GM12878 (cell line): ENCODE measurements at regions of chr20 and their contacts with region 1.

Region 1: DNA sequence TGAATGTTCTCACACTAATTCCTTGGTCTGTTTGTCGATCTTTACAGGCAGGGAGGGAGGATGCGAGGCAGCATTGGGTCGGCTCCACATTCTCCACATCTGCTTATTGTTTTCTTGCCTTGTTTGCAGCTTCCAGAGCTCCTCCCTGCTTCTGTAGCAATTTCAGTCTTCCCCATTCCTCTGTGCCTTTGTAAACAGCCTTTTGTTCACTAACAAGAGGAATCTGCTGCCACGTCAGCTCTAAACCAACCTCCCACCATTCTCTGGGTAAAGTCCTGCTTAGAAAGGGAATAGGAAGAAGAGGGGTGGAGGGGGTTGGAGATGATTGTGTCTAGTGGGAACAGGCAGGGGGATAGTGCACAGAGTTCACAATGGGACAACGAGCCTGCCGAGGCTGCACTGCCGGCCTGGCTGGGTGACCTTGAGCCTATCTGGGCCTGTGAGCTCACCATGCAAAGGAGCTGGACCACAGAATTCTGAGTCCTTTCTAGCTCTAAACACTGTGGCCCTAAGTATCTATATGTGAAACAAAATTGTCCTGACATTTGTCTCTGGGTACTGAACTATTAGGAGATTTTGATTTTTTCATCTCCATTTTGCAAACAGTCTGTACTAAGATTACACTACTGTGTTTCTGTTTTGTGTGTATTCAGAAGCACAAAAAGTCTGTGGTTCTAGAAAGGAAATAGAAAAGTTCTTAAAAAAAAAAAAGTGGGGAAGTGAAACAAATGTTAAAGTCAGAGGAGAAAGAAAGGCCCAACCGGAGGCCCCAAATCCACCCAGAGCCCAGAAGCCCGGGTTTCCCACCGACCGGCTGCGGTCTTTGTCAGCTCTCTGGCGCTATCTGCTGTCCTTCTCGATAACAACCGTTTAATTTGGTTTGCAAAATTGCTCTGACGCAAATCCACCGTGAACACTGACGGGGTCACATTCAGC is 1.4 kb upstream of the PRND start:
- DNase-seq: peak; percentile 71
- ATAC-seq: peak; percentile 96
- H3K4me3 ChIP-seq: peak overlapping the region; percentile 19; the same call in 1 of the 2 replicates
- H3K27ac ChIP-seq: peak overlapping the region; percentile 67
- H3K4me1 ChIP-seq: peaks cover 17% of the 10 kb centered on the region
- H3K27me3 ChIP-seq: no peaks in the 10 kb centered on the region
- CTCF ChIP-seq: peak; percentile 65 to 86 (median 72); a peak in 5 of 6 replicates
- EP300 ChIP-seq: peak in 1 of 2 experiments; percentile 45; a peak in 1 of 4 replicates
- POLR2A ChIP-seq: peak; percentile 37; the same call in 1 of the 2 replicates
- RAD21 ChIP-seq: peak; percentile 96

Region 2: DNA sequence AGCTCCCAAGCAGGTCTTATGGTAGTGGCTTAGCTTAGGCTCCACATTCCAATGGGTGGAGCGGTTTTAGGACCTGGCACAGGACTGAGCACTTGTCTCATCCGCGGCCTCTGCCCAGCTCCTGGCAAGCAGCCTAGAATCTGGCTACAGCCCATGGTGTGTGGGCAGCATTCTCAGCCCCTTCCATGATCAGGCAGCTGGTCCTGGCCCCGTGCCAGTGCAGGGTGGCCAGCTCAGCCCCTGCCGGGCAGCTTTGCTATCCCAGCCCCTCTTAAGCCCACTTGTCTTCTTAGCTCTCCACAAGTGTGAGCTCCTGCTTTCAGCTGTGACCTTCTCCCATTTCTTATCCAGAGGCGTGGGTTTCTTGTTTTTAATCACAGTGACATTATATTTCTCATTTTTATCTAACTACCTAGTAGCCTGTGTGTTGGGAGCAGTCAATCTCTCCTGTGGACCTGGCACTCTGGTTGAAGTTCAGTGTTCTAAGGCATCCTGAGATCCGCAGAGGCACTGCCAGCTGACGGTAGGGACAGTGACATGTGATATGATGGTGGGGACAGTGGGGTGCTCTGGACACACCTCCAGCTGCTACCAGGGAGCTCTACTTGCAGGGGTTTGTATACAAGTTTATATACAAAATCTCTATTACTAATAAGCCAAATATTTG is 118.5 kb before region 1 on chr20:
- CTCF ChIA-PET with region 1: interaction called, 199 read pairs
- POLR2A ChIA-PET with region 1: no interaction called
- RAD21 ChIA-PET with region 1: interaction called, 36 read pairs
- SMC1A ChIA-PET with region 1: interaction called, 15 read pairs
- in situ Hi-C with region 1: loop called (anchors 5 kb)
- intact Hi-C with region 1: no loop called
- DNase-seq: no peak
- ATAC-seq: no peak
- H3K4me3 ChIP-seq: no peak overlapping the region
- H3K27ac ChIP-seq: no peak overlapping the region
- H3K4me1 ChIP-seq: no peaks in the 10 kb centered on the region
- H3K27me3 ChIP-seq: no peaks in the 10 kb centered on the region; a peak in 1 of 4 replicates
- CTCF ChIP-seq: no peak
- EP300 ChIP-seq: no peak
- POLR2A ChIP-seq: no peak
- RAD21 ChIP-seq: no peak

Region 3: DNA sequence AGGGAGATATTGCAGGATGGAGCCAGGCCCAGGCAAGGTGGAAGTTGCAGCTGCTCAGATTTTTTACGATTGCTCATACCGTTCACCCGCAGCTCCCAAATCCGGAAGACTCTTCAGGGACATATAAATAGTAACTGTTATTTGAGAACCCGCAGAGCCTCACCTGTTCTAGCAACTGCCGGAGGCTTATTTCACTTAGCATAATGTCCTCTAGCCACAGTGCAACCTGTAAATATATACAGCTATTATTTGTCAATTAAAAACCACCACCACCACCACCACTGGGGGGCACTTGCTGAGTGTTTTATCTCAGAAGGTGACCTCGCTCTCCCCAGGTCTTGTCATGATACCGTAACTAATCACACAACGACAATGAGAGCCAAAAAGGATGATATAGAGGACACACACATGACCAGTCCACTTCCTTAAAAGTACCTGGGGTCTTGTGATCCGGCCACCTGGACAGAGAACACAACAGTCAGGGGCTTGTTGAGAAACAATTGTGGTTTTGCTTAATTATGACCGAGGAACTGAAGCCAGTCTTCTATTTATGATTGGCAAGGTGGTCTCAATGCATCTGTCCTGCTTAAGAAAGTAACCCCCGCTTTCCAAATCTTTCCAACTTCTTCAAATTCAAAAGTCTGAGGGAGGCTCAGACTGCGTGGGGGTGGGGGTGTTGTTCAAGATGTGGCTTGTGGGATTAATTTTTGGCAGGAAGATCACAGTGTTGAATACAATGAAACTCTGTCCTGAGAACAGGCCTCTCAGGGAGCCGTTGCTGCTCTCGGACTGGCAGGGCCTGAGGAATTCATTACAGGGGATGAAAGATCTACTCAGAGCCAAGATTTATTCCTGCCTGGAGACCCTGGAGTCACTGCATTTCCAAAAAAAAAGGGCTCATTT is 106.3 kb before region 1 on chr20:
- CTCF ChIA-PET with region 1: interaction called, 199 read pairs
- POLR2A ChIA-PET with region 1: interaction called, 5 read pairs
- RAD21 ChIA-PET with region 1: interaction called, 36 read pairs
- SMC1A ChIA-PET with region 1: interaction called, 32 read pairs
- in situ Hi-C with region 1: no loop called
- intact Hi-C with region 1: loop called (anchors 1 kb)
- DNase-seq: peak; percentile 38
- ATAC-seq: peak; percentile 90
- H3K4me3 ChIP-seq: no peak overlapping the region
- H3K27ac ChIP-seq: no peak overlapping the region
- H3K4me1 ChIP-seq: peaks cover 13% of the 10 kb centered on the region
- H3K27me3 ChIP-seq: no peaks in the 10 kb centered on the region
- CTCF ChIP-seq: peak; percentile 47 to 56 (median 49)
- EP300 ChIP-seq: no peak; a peak in 1 of 4 replicates
- POLR2A ChIP-seq: no peak
- RAD21 ChIP-seq: peak; percentile 58